Left cardiac atrium (tissue), 4 donors: ENCODE measurements at regions of chr18 and their contacts with region 1.

Region 1: DNA sequence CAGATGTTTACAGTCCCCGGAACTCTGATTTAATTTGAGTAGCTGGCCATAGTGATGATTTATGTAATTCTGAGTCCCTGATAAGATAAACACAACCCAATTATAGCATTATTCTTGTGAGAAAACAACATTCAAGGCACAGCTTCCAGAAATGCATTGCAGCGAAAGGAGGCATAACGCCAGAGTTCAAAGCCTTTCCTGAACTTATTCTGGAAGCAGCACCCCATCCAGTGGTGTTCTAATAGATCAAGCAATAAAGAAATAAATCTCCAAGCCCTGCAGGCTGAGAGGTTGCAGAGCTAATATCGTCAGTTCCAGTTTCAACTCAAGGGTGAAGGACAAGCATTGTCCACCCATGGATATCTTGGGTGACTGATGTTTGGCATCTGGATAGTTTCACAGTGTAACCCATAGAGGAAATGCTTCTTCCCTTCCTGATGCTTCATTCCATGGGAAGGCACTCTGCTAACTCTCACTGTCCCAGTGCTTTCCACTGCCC is 18.8 kb downstream of the CDH2 start:
- DNase-seq: no peak
- ATAC-seq: peak; percentile 12 to 55

Region 2: DNA sequence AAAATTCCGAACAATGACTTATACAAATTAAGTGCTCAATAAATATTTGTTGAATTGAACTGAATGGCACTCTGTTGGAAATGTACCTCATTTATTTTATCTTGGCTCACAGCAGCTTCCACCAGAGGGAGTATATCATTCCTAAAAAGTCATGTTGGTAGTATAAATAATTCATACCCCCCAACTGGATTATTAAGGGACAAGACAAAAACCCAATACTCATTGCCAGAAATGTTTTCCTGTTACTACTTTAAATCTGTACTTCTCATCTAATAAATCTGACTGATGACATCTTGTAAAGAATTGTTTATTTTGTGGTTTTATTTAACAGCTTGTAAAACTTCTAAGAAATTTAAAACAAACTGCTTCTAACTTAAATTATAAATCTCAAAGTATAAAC is 145.1 kb before region 1 on chr18:
- intact Hi-C with region 1: loop called in 1 of 2 experiments (anchors 10 kb)
- DNase-seq: no peak
- ATAC-seq: no peak

Region 3: DNA sequence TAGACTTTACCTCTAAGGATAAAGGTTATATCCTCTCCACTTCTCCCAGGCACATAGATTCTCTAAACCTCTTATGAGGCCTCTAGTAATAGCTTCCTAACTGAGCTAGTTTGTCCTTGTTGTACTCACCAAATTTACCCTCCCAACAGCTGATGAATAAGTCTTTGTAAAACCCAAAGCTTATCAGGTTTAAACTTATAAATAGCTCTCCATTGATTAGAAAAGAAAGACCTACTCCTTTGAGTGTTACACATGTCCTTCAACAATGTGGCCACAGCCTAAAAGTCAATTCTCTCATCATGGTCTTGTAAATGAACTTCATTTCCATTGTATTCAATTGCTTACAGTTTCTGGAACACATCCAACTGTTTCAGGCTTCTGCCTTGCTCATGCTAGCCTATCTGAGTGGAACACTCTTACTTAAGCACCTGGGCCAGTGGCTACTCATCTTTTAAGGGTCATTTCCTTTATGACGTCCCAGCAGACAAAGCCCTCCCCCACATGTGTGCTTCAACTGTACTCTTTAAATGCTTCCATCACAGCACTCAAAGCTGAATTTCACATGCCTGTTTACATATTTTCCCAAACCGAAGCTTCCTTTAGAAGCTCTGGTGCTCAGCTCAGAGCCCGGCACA is 112.8 kb before region 1 on chr18:
- intact Hi-C with region 1: no loop called
- DNase-seq: no peak
- ATAC-seq: peak in 1 of 2 donors; percentile 38

Region 4: DNA sequence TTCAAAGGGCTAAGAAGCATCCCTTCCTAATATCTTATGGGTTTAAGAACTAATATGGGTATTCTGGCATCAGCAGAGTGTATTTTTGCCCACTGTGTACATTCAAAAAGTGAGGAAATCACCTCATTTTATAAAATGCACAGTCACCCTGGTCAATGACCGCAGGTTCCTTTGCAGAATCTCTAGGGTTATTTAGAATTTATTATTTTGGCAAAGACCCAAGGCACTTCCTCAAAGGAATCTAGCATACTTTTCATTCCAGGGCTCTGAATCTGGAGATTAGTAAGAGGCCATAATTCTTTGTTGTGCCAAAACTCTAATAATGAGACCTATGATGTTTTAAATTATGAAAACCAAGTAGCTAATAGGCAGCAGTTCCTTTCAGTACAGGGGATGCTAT is 46.0 kb after region 1 on chr18:
- intact Hi-C with region 1: no loop called
- DNase-seq: no peak
- ATAC-seq: no peak